ENCODE measurements at regions of chr9 and their contacts with region 1.

Region 1: GRCh38 chr9:73170185-73170957 is 18.7 kb downstream of the ANXA1 start:
- DNase-seq: no peak
- H3K27ac ChIP-seq: no peak overlapping the region
- CTCF ChIP-seq: no peak

Region 2: GRCh38 chr9:72060513-72060912 is 1109.9 kb before region 1 on chr9 and contains the start of gene C9orf57:
- CTCF ChIA-PET with region 1: no interaction called
- POLR2A ChIA-PET with region 1: interaction called, 12 read pairs
- DNase-seq: no peak
- H3K27ac ChIP-seq: no peak within 1 kb of the TSS
- CTCF ChIP-seq: no peak